ENCODE measurements at regions of chrX and their contacts with region 1.

Region 1: GRCh38 chrX:136028251-136028984 is 43.2 kb downstream of the SLC9A6 start:
- DNase-seq: no peak
- ATAC-seq: peak; percentile 42 to 52

Region 2: DNA sequence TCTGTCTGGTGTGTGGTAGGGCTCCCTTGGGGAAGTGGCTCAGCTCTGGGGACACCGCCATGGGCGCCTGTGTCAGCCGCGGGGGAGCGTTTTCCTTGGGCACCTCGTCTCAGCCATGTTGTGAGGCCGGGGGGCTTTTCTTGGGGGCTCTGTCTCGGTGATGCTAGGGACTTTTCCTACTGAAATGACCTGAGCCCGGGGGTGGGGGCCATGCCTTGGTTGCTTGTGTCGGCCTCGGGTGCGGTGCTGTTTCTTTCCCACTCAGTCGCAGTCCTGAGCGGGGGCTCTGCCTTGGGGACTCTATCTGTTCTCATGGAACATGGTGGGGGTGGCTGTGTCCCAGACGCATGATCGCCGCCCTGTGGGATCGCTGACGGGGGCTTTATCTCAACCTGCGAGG is 314.6 kb before region 1 on chrX:
- intact Hi-C with region 1: no loop called
- DNase-seq: no peak
- ATAC-seq: no peak

Region 3: GRCh38 chrX:136162831-136163570 is 134.6 kb after region 1 on chrX:
- intact Hi-C with region 1: loop called (anchors 2 to 5 kb)
- DNase-seq: peak; percentile 58
- ATAC-seq: peak; percentile 62 to 83

Region 4: GRCh38 chrX:136192839-136193414 is 164.5 kb after region 1 on chrX:
- intact Hi-C with region 1: no loop called
- DNase-seq: no peak
- ATAC-seq: peak; percentile 49 to 78

Region 5: GRCh38 chrX:136209016-136209738 is 180.8 kb after region 1 on chrX:
- intact Hi-C with region 1: loop called in 1 of 2 experiments (anchors 5 kb)
- DNase-seq: peak; percentile 69
- ATAC-seq: peak; percentile 16 to 57

Region 6: GRCh38 chrX:136268051-136269048 is 239.9 kb after region 1 on chrX:
- intact Hi-C with region 1: loop called (anchors 2 to 10 kb)
- DNase-seq: no peak
- ATAC-seq: no peak

Region 7: GRCh38 chrX:136488706-136489105 is 460.3 kb after region 1 on chrX:
- intact Hi-C with region 1: no loop called
- DNase-seq: no peak
- ATAC-seq: no peak

Region 8: DNA sequence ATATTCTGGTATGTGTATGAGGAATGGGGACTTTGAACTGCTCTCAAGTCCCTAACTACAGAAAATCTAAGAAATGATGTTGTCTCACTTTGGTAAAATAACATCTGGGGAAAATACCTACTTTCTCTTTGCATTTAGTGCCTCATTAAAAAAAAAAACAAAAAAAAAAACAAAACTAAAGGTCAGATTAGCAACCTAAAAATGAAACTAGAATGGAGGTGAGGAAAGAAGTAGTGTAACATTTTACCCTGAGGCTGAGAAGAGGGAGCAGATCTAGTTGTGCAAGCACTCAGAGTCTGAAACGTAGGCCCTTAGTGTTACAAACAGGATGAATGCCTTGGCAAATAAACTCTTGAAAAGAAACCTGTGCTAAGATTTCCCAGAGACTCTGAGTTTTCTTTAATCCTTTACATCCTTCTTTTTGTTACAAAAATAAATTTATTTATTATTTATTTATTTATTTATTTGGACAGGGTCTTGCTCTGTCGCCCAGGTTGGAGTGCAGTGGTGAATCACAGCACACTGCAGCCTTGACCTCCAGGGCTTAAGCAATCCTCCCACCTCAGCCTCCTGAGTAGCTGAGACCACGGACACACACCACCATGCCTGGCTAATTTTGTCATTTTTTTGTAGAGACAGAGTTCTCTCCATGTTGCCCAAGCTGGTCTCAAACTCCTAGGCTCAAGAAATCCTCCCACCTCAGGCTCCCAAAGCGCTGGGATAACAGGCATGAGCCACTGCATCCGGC is 559.8 kb after region 1 on chrX:
- intact Hi-C with region 1: loop called in 1 of 2 experiments (anchors 10 kb)
- DNase-seq: no peak
- ATAC-seq: no peak

Measured in left cardiac atrium (tissue), 4 donors.